ENCODE measurements at regions of chr15 and their contacts with region 1.

Region 1: DNA sequence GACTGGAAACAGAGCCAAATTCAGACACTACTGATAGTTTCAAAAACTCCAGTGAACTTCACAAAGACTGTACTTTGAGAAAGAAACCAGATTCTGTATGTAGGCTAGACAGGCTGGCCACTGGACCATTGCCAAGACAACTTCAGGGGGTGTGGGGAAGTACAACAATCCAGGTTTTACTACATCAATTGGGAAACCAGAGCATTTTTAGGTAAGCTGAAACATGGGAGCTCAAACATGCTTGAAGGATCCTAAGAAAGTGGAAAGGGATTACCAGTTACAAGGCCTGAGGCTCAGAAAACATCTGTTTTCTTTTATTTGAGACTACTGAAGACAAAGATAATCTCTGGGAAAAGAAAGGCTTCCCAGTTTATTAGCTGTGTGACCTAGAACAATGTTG is 26.9 kb upstream of the ZNF280D start:
- DNase-seq: no peak
- H3K4me3 ChIP-seq: no peak overlapping the region
- H3K27ac ChIP-seq: peak overlapping the region; percentile 42
- H3K4me1 ChIP-seq: peaks cover 60% of the 10 kb centered on the region
- H3K27me3 ChIP-seq: no peaks in the 10 kb centered on the region
- CTCF ChIP-seq: no peak
- POLR2A ChIP-seq: no peak

Region 2: DNA sequence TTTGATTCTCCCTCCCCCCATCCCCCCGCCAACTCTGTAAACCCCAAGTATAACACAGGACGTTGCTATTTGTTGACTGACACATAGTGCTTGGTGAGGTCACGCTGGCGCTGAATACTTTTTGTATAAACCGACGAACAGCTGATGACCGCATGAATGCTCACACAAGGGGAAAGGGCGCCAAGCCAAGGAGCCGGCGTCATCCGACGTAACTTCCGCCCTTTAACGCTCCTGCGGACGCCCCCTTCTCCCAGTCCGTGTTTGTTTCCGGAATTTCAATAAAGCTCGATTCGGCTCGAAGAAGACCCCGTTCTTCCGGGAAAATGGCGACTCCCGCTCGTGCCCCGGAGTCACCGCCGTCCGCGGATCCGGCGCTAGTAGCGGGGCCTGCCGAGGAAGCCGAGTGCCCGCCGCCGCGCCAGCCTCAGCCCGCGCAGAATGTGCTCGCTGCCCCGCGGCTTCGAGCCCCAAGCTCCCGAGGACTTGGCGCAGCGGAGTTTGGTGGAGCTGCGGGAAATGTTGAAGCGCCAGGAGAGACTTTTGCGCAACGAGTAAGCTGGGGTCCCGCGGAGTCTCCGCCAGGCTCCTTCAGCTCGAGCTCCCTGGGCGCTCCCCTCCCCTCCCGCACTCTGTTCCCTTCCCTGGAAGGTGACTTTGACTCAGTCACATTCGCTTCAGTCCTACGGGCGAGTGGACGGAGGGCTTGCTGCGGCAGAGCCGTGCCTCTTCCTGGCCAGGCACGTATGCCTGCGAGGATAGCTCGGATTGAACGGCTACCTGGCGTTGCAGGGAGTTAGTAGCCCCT is 946.4 kb after region 1 on chr15 and contains the start of gene POLR2M:
- intact Hi-C with region 1: loop called (anchors 5 kb)
- DNase-seq: peak in 1 of 2 donors; percentile 97
- H3K4me3 ChIP-seq: peak within 1 kb of the TSS; percentile 79 to 82
- H3K27ac ChIP-seq: peak within 1 kb of the TSS; percentile 93
- H3K4me1 ChIP-seq: peaks cover 60% of the 10 kb centered on the region
- H3K27me3 ChIP-seq: no peaks in the 10 kb centered on the region
- CTCF ChIP-seq: no peak
- POLR2A ChIP-seq: peak in 1 of 2 donors; percentile 68
- total RNA-seq, gene POLR2M: 204 TPM

Measured in vagina (tissue), 2 donors.